B cell (primary cell): ENCODE measurements at regions of chr1 and their contacts with region 1.

Region 1: GRCh38 chr1:1732381-1732780 is 8.2 kb upstream of the CDK11A start:
- DNase-seq: no peak
- ATAC-seq: no peak
- H3K4me3 ChIP-seq: no peak overlapping the region
- H3K4me3 Mint-ChIP-seq: no peak overlapping the region
- H3K27ac ChIP-seq: no peak overlapping the region
- H3K27ac Mint-ChIP-seq: no peak overlapping the region
- H3K4me1 ChIP-seq: peaks cover 5 to 8% of the 10 kb centered on the region in 2 donors
- H3K4me1 Mint-ChIP-seq: no peaks in the 10 kb centered on the region
- H3K27me3 ChIP-seq: no peaks in the 10 kb centered on the region
- H3K27me3 Mint-ChIP-seq: no peaks in the 10 kb centered on the region
- CTCF ChIP-seq: no peak

Region 2: GRCh38 chr1:1491601-1492000 is 240.8 kb before region 1 on chr1:
- CTCF ChIA-PET with region 1: no interaction called
- POLR2A ChIA-PET with region 1: no interaction called
- intact Hi-C with region 1: no loop called
- DNase-seq: no peak
- ATAC-seq: no peak
- H3K4me3 ChIP-seq: no peak overlapping the region
- H3K4me3 Mint-ChIP-seq: no peak overlapping the region
- H3K27ac ChIP-seq: no peak overlapping the region
- H3K27ac Mint-ChIP-seq: no peak overlapping the region
- H3K4me1 ChIP-seq: no peaks in the 10 kb centered on the region
- H3K4me1 Mint-ChIP-seq: no peaks in the 10 kb centered on the region
- H3K27me3 ChIP-seq: no peaks in the 10 kb centered on the region
- H3K27me3 Mint-ChIP-seq: no peaks in the 10 kb centered on the region
- CTCF ChIP-seq: no peak

Region 3: GRCh38 chr1:1721201-1721600 is 11.2 kb before region 1 on chr1:
- CTCF ChIA-PET with region 1: no interaction called
- POLR2A ChIA-PET with region 1: no interaction called
- intact Hi-C with region 1: no loop called
- DNase-seq: no peak
- ATAC-seq: no peak
- H3K4me3 ChIP-seq: no peak overlapping the region
- H3K4me3 Mint-ChIP-seq: no peak overlapping the region
- H3K27ac ChIP-seq: no peak overlapping the region
- H3K27ac Mint-ChIP-seq: no peak overlapping the region
- H3K4me1 ChIP-seq: no peaks in the 10 kb centered on the region
- H3K4me1 Mint-ChIP-seq: peaks cover 2% of the 10 kb centered on the region
- H3K27me3 ChIP-seq: no peaks in the 10 kb centered on the region
- H3K27me3 Mint-ChIP-seq: no peaks in the 10 kb centered on the region
- CTCF ChIP-seq: no peak

Region 4: GRCh38 chr1:1797731-1798341 is 65.5 kb after region 1 on chr1:
- CTCF ChIA-PET with region 1: no interaction called
- POLR2A ChIA-PET with region 1: interaction called, 10 read pairs
- intact Hi-C with region 1: no loop called
- DNase-seq: peak; percentile 68
- ATAC-seq: peak; percentile 81
- H3K4me3 ChIP-seq: no peak overlapping the region
- H3K4me3 Mint-ChIP-seq: peak overlapping the region; percentile 40
- H3K27ac ChIP-seq: peak overlapping the region; percentile 40 to 74
- H3K27ac Mint-ChIP-seq: peak overlapping the region; percentile 90
- H3K4me1 ChIP-seq: peaks cover 27 to 40% of the 10 kb centered on the region in 2 donors
- H3K4me1 Mint-ChIP-seq: peaks cover 53% of the 10 kb centered on the region
- H3K27me3 ChIP-seq: no peaks in the 10 kb centered on the region
- H3K27me3 Mint-ChIP-seq: no peaks in the 10 kb centered on the region
- CTCF ChIP-seq: no peak